ENCODE measurements at regions of chr4 and their contacts with region 1.

Region 1: GRCh38 chr4:66489783-66490452 is 819.6 kb upstream of the EPHA5 start:
- DNase-seq: no peak
- ATAC-seq: no peak
- H3K4me3 ChIP-seq: no peak overlapping the region
- H3K27ac ChIP-seq: no peak overlapping the region
- H3K4me1 ChIP-seq: no peaks in the 10 kb centered on the region
- H3K27me3 ChIP-seq: no peaks in the 10 kb centered on the region
- CTCF ChIP-seq: no peak

Region 2: GRCh38 chr4:66014146-66014765 is 475.7 kb before region 1 on chr4:
- CTCF ChIA-PET with region 1: no interaction called
- POLR2A ChIA-PET with region 1: no interaction called
- in situ Hi-C with region 1: no loop called
- intact Hi-C with region 1: no loop called
- DNase-seq: no peak
- ATAC-seq: no peak
- H3K4me3 ChIP-seq: no peak overlapping the region
- H3K27ac ChIP-seq: no peak overlapping the region
- H3K4me1 ChIP-seq: no peaks in the 10 kb centered on the region
- H3K27me3 ChIP-seq: no peaks in the 10 kb centered on the region
- CTCF ChIP-seq: no peak

Region 3: DNA sequence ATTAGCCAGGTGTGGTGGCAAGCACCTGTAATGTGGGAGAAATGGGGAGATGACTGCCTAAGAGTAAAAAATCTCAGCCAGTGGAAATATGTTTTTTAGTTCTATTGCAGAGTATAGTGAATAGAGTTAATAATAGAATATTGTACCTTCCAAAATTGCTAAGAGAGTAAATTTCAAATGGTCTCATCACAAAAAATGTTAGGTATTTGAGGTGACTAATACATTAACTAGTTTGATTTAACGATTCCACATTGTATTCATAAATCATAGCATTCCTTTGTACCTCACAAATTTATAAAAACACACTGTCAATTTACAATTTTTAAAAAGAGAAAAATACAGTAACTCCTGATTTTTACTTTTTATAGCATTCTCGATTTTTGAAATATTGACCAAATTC is 138.2 kb before region 1 on chr4:
- CTCF ChIA-PET with region 1: no interaction called
- POLR2A ChIA-PET with region 1: no interaction called
- in situ Hi-C with region 1: no loop called
- intact Hi-C with region 1: no loop called
- DNase-seq: no peak
- ATAC-seq: no peak
- H3K4me3 ChIP-seq: no peak overlapping the region
- H3K27ac ChIP-seq: no peak overlapping the region
- H3K4me1 ChIP-seq: no peaks in the 10 kb centered on the region
- H3K27me3 ChIP-seq: no peaks in the 10 kb centered on the region
- CTCF ChIP-seq: no peak

Region 4: GRCh38 chr4:66602622-66603021 is 112.7 kb after region 1 on chr4:
- CTCF ChIA-PET with region 1: interaction called, 12 read pairs
- POLR2A ChIA-PET with region 1: no interaction called
- in situ Hi-C with region 1: no loop called
- intact Hi-C with region 1: no loop called
- DNase-seq: no peak
- ATAC-seq: no peak
- H3K4me3 ChIP-seq: no peak overlapping the region
- H3K27ac ChIP-seq: no peak overlapping the region; the same call in 1 of the 2 replicates
- H3K4me1 ChIP-seq: peaks cover 4% of the 10 kb centered on the region; the same call in 1 of the 2 replicates
- H3K27me3 ChIP-seq: no peaks in the 10 kb centered on the region
- CTCF ChIP-seq: no peak